Mucosa of descending colon (tissue), 3 donors: ENCODE measurements at regions of chr5 and their contacts with region 1.

Region 1: DNA sequence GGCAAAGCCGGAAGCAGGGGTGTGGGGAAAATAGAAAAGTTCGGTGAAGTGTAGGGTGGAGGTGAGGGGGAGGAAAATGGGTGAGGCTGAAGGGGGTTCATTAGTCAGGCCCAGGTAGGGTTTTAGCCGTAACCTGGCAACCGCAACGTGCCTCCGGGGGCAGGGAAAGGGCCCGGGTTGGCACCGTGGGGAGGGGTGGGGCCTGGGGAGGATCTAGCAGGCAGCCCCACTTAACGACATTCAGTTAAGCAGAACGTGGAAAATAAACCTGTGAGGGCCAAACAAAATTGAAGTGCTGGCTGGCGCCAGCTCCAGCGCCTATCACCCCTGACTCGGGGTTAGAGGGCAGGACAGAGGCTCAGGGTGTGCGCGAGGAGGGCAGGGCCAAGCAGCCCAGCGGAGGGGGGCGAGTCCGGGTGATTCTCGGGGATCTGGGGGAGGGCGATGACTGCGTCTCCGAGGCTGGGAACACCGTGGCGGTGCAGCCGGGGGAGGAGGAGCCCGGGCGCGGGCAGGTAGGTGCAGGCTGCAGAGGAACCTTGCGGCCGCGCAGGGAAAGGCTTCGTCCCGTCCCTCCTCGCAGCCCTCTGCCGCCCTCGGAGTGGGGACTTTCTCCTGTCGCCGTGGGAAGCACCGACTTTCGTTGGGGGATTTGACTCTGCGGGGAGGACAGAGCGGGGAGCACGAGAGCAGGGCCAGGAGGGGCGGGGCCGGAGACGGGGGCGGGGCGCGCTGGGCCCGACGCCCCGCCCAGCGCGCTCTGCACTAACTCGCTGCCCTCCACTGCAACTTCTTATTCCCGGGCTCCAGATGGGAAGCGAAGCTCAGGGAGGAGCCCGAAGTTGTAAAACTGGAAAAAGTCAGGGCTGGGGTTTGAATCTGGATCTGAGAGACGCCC is 5.1 kb downstream of the RGS14 start:
- DNase-seq: peak; percentile 85 to 87 (median 86)
- ATAC-seq: peak; percentile 80
- H3K4me3 ChIP-seq: peak overlapping the region; percentile 3
- H3K4me1 ChIP-seq: peaks cover 40% of the 10 kb centered on the region
- CTCF ChIP-seq: no peak

Region 2: GRCh38 chr5:177311723-177312648 is 50.9 kb before region 1 on chr5 and contains the start of gene MXD3:
- intact Hi-C with region 1: loop called in 1 of 2 experiments (anchors 10 kb)
- DNase-seq: peak; percentile 96 to 99 (median 98)
- ATAC-seq: peak; percentile 91
- H3K4me3 ChIP-seq: peak within 1 kb of the TSS; percentile 19
- H3K4me1 ChIP-seq: peaks cover 28% of the 10 kb centered on the region
- CTCF ChIP-seq: no peak
- total RNA-seq, gene MXD3: 10.3 to 19.4 (median 10.9) TPM

Region 3: DNA sequence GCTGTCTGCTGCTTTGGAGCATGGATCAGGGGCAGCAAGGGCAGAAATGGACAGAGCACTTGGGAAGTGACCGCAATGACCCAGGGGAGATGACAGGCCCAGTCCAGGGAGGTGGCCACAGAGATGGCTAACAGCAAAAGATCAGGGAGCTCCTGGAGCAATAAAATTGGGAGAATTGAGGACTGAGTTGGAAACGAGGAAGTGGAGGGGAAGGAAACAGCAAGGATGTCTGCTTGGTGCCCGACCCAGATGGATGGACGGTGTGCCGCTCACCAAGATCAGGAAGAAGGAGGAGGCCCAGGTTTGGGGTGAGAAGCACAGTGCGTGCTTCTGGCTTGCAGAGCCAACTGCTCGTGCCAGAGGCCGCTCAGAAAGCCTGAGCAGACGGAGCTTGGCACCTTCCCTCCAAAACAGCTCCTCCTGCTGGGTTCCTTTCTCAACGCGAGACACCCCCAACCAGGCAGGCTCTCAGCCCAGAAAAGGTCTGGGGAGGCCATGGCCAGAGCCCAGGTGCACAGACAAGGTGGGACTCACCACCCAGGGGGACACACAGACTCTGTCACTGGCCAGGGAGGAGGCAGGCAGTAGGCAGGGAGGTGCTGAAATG is 19.7 kb after region 1 on chr5:
- intact Hi-C with region 1: no loop called
- DNase-seq: no peak
- ATAC-seq: peak; percentile 54
- H3K4me3 ChIP-seq: no peak overlapping the region
- H3K4me1 ChIP-seq: no peaks in the 10 kb centered on the region
- CTCF ChIP-seq: no peak

Region 4: DNA sequence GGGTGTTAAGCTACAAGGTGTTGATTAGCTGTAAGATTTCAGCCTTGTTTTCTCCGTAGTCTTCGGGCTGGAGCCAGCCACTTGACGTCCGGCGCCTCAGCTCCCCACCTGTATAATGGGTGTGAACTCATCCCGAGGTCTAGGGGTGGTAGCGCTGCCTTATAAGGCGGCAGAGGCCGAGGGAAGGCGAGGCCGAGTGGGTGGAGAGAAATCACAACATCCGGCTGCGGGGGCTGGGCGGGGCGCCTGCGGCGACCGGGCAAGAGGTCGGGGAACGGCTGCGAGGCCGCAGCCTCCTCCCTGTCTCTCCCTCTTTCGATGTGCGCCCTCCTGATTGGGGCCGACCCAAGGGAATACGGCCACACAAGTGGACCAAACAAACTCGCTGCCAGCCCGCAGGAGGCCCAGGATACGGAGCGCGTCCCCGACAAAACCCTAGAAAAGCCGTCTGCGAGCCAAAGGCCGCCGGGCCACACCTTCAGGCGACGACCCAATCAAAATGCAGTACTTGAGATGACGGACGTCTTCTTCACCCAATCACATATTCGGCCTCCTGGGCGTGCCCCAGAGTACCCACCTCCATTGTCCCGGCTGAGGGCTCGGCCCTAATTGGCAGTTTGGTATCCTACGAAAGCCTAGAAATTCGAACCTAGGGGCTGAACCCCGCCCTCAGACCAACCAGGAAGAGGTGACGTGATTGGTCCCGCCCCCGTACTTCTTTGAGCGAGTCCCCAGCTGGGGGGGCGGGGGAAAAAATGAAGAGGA is 63.1 kb after region 1 on chr5:
- intact Hi-C with region 1: no loop called
- DNase-seq: peak; percentile 98 to 100 (median 99)
- ATAC-seq: peak; percentile 88
- H3K4me3 ChIP-seq: peak overlapping the region; percentile 80
- H3K4me1 ChIP-seq: peaks cover 23% of the 10 kb centered on the region
- CTCF ChIP-seq: no peak